Heart right ventricle (tissue), 16 donors: ENCODE measurements at regions of chr12 and their contacts with region 1.

Region 1: GRCh38 chr12:46268590-46269558 is at the start of gene SLC38A1:
- DNase-seq: peak; percentile 75 to 83
- ATAC-seq: peak; percentile 73 to 89 (median 85)
- H3K4me3 ChIP-seq: peak within 1 kb of the TSS; percentile 47 to 75 (median 62)
- H3K27ac ChIP-seq: peak within 1 kb of the TSS; percentile 37 to 91 (median 81)
- H3K4me1 ChIP-seq: peaks cover 0 to 52% (median 22%) of the 10 kb centered on the region in 9 donors
- H3K27me3 ChIP-seq: peaks cover 0 to 36% (median 6%) of the 10 kb centered on the region in 7 donors
- CTCF ChIP-seq: peak in 1 of 9 donors; percentile 3
- total RNA-seq, gene SLC38A1: 120 to 221 (median 142) TPM

Region 2: DNA sequence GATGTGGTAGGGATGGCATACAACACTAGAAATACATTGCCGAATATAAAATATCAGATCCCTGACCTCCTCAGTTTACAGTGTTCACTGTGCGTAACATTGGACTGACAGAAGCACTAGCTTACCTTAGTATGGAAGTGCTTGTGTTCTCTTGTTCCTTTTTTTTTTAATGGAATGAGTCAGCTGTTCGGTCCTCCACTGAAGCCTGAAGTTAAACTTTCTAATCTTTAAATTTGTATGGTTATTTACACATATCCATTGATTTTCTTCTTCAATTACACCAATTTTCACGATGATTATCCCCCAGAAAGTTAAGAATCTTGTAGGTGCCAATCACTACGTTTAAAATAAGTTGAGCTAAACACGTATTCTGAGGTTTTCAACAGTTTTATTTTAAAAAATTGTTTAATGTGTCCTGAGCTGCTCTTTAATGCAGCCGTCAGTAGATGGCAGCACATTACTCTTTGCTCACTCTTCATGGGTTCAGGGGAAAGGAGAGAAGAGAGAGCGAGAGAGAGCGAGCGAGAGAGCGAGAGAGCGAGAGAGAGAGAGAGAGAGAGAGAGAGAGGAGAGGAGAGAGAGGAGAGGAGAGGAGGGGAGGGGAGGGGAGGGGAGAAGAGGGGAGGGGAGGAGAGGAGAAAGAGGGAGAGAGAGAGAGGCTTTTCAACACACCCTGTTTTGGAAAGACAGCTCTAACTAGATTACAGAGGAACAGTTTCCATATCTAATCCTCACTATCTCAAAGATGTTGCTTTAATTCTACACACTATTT is 143.8 kb before region 1 on chr12:
- intact Hi-C with region 1: loop called in 1 of 10 experiments (anchors 10 kb)
- DNase-seq: peak in 1 of 2 donors; percentile 65
- ATAC-seq: peak; percentile 85 to 94 (median 88)
- H3K4me3 ChIP-seq: peak overlapping the region in 3 of 10 donors; percentile 13 to 19 (median 17)
- H3K27ac ChIP-seq: no peak overlapping the region
- H3K4me1 ChIP-seq: peaks cover 0 to 14% (median 5%) of the 10 kb centered on the region in 9 donors
- H3K27me3 ChIP-seq: no peaks in the 10 kb centered on the region
- CTCF ChIP-seq: peak; percentile 37 to 81 (median 58)

Region 3: DNA sequence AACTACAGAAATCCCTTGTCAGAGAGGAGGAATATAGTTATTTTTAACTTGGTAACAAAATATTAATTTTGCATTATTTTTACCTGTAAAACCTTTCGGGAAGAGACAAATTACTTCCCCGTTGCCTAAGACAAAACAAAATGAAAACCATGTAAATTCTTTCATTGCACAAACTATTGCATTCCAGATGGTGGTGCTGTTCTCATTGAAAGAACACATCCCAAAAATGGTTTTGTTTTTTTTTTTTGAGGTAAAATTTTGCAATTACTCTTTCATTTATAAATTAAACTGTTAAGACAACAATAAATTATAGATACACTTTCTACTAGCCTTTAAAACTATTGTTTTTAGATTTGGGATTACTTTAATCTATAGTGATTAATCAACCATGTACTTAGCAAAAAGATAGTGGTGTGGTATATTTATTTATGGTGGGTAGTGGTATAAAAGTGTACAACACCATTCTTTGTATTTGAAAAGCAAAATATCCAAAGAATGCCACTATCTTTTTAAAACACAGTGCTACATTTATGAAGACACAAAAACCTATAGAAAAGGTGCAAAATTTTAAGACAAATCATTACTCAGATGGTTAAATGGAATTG is 115.5 kb before region 1 on chr12:
- intact Hi-C with region 1: loop called in 1 of 10 experiments (anchors 10 kb)
- DNase-seq: no peak
- ATAC-seq: no peak
- H3K4me3 ChIP-seq: no peak overlapping the region
- H3K27ac ChIP-seq: no peak overlapping the region
- H3K4me1 ChIP-seq: peaks cover 0 to 12% (median 0%) of the 10 kb centered on the region in 9 donors
- H3K27me3 ChIP-seq: no peaks in the 10 kb centered on the region
- CTCF ChIP-seq: peak; percentile 10 to 71 (median 61)

Region 4: GRCh38 chr12:46209914-46210872 is 58.7 kb before region 1 on chr12:
- intact Hi-C with region 1: loop called in 7 of 10 experiments (anchors 2 to 10 kb)
- DNase-seq: peak; percentile 25 to 37
- ATAC-seq: peak; percentile 51 to 95 (median 78)
- H3K4me3 ChIP-seq: no peak overlapping the region
- H3K27ac ChIP-seq: peak overlapping the region; percentile 42 to 73 (median 58)
- H3K4me1 ChIP-seq: peaks cover 0 to 76% (median 39%) of the 10 kb centered on the region in 9 donors
- H3K27me3 ChIP-seq: no peaks in the 10 kb centered on the region
- CTCF ChIP-seq: no peak

Region 5: GRCh38 chr12:46364777-46365580 is 96.1 kb after region 1 on chr12:
- intact Hi-C with region 1: loop called in 2 of 10 experiments (anchors 5 to 10 kb)
- DNase-seq: peak in 1 of 2 donors; percentile 71
- ATAC-seq: peak in 5 of 8 donors; percentile 28 to 83 (median 42)
- H3K4me3 ChIP-seq: peak overlapping the region in 4 of 10 donors; percentile 0 to 7 (median 4)
- H3K27ac ChIP-seq: peak overlapping the region in 7 of 10 donors; percentile 22 to 60 (median 48)
- H3K4me1 ChIP-seq: peaks cover 14 to 100% (median 76%) of the 10 kb centered on the region in 9 donors
- H3K27me3 ChIP-seq: no peaks in the 10 kb centered on the region
- CTCF ChIP-seq: no peak